ENCODE measurements at regions of chr14 and their contacts with region 1.

Region 1: GRCh38 chr14:73777401-73777800 is 63.2 kb upstream of the PNMA1 start:
- DNase-seq: peak; percentile 71
- H3K4me3 ChIP-seq: no peak overlapping the region
- H3K27ac ChIP-seq: peak overlapping the region; percentile 96
- H3K4me1 ChIP-seq: peaks cover 76% of the 10 kb centered on the region
- CTCF ChIP-seq: peak; percentile 73

Region 2: GRCh38 chr14:73728717-73729330 is 48.6 kb before region 1 on chr14:
- CTCF ChIA-PET with region 1: interaction called, 12 read pairs
- POLR2A ChIA-PET with region 1: interaction called, 4 read pairs
- intact Hi-C with region 1: loop called (anchors 1 kb)
- DNase-seq: peak; percentile 87
- H3K4me3 ChIP-seq: no peak overlapping the region
- H3K27ac ChIP-seq: peak overlapping the region; percentile 34
- H3K4me1 ChIP-seq: peaks cover 9% of the 10 kb centered on the region
- CTCF ChIP-seq: peak; percentile 97

Region 3: DNA sequence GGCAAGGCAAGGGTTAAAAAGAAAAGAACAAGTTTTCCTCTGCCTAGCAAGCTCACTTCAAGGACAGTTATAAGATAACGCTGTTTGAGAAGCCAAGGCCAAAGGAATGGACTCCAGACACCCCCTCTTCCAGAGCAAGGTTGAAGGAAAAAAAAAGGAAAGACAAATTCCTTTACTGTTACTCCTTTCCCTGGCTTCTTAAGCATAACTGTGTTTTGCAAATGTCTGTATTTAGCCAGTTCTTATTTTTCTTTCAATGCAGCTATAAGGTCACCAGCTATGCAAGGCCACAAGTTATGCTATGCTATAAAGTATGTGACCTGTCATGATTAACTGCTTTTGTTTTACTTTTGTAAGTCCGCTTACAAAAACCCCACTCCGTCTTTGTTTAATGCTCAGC is 135.9 kb after region 1 on chr14:
- CTCF ChIA-PET with region 1: no interaction called
- POLR2A ChIA-PET with region 1: no interaction called
- intact Hi-C with region 1: no loop called
- DNase-seq: no peak
- H3K4me3 ChIP-seq: no peak overlapping the region
- H3K27ac ChIP-seq: no peak overlapping the region
- H3K4me1 ChIP-seq: no peaks in the 10 kb centered on the region
- CTCF ChIP-seq: no peak

Region 4: DNA sequence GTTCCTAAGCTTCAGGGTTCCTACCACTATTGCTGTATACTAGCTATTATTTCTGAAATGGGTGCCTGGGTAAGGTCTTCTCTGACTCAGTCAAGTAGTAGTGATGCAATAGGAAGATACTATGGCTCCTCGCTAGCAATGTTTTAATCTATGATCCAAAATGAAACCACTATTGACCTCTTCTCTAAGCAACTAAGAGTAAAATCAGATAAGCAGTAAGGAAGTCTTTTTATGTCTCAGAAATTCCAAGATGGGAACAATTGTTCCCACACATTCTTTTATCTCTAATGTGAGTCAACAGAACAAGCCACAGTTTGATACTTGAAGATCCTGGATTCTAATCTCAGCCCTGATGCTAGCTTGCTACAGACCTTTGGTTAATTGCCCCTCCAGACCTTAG is 890.4 kb after region 1 on chr14:
- CTCF ChIA-PET with region 1: no interaction called
- POLR2A ChIA-PET with region 1: no interaction called
- intact Hi-C with region 1: no loop called
- DNase-seq: no peak
- H3K4me3 ChIP-seq: no peak overlapping the region
- H3K27ac ChIP-seq: no peak overlapping the region
- H3K4me1 ChIP-seq: no peaks in the 10 kb centered on the region
- CTCF ChIP-seq: no peak

Measured in OCI-LY7 (cell line).